HCT116 (cell line): ENCODE measurements at regions of chr16 and their contacts with region 1.

Region 1: GRCh38 chr16:67055712-67056487 is 27.0 kb downstream of the CBFB start:
- DNase-seq: no peak
- ATAC-seq: peak; percentile 34; the same call in 1 of the 2 replicates
- H3K4me3 ChIP-seq: no peak overlapping the region
- H3K27ac ChIP-seq: no peak overlapping the region
- H3K4me1 ChIP-seq: peaks cover 0 to 15% of the 10 kb centered on the region in 2 experiments; a peak in 2 of 4 replicates
- H3K27me3 ChIP-seq: no peaks in the 10 kb centered on the region
- CTCF ChIP-seq: no peak
- POLR2A ChIP-seq: no peak
- RAD21 ChIP-seq: no peak

Region 2: GRCh38 chr16:67040906-67041305 is 15.0 kb before region 1 on chr16:
- CTCF ChIA-PET with region 1: no interaction called
- POLR2A ChIA-PET with region 1: interaction called, 4 read pairs
- RAD21 ChIA-PET with region 1: no interaction called
- intact Hi-C with region 1: loop called (anchors 2 kb)
- DNase-seq: no peak
- ATAC-seq: no peak
- H3K4me3 ChIP-seq: no peak overlapping the region
- H3K27ac ChIP-seq: no peak overlapping the region
- H3K4me1 ChIP-seq: no peaks in the 10 kb centered on the region
- H3K27me3 ChIP-seq: no peaks in the 10 kb centered on the region
- CTCF ChIP-seq: no peak
- POLR2A ChIP-seq: no peak
- RAD21 ChIP-seq: no peak

Region 3: GRCh38 chr16:67104061-67104460 is 48.2 kb after region 1 on chr16:
- CTCF ChIA-PET with region 1: no interaction called
- POLR2A ChIA-PET with region 1: no interaction called
- RAD21 ChIA-PET with region 1: no interaction called
- intact Hi-C with region 1: no loop called
- DNase-seq: no peak
- ATAC-seq: peak; percentile 89
- H3K4me3 ChIP-seq: no peak overlapping the region
- H3K27ac ChIP-seq: no peak overlapping the region
- H3K4me1 ChIP-seq: peaks cover under 1 to 9% of the 10 kb centered on the region in 2 experiments; a peak in 3 of 4 replicates
- H3K27me3 ChIP-seq: no peaks in the 10 kb centered on the region
- CTCF ChIP-seq: peak in 2 of 3 experiments; percentile 69 to 72; a peak in 4 of 6 replicates
- POLR2A ChIP-seq: no peak
- RAD21 ChIP-seq: peak; percentile 44